Heart right ventricle (tissue), 16 donors: ENCODE measurements at regions of chr16 and their contacts with region 1.

Region 1: GRCh38 chr16:9957002-9957401 is 225.2 kb downstream of the GRIN2A start:
- DNase-seq: no peak
- ATAC-seq: no peak
- H3K4me3 ChIP-seq: no peak overlapping the region
- H3K27ac ChIP-seq: no peak overlapping the region
- H3K4me1 ChIP-seq: peaks cover 0 to 13% (median 0%) of the 10 kb centered on the region in 9 donors
- H3K27me3 ChIP-seq: peaks cover 0 to 36% (median 10%) of the 10 kb centered on the region in 7 donors
- CTCF ChIP-seq: no peak

Region 2: GRCh38 chr16:9159839-9160550 is 797.0 kb before region 1 on chr16:
- intact Hi-C with region 1: loop called in 1 of 10 experiments (anchors 5 kb)
- DNase-seq: peak in 1 of 2 donors; percentile 12
- ATAC-seq: peak; percentile 42 to 77 (median 58)
- H3K4me3 ChIP-seq: no peak overlapping the region
- H3K27ac ChIP-seq: no peak overlapping the region
- H3K4me1 ChIP-seq: peaks cover 0 to 6% (median 0%) of the 10 kb centered on the region in 9 donors
- H3K27me3 ChIP-seq: peaks cover 0 to 23% (median 8%) of the 10 kb centered on the region in 7 donors
- CTCF ChIP-seq: peak; percentile 31 to 84 (median 72)